IMR-90 (cell line): ENCODE measurements at regions of chr7 and their contacts with region 1.

Region 1: GRCh38 chr7:36512616-36513015 is 123.0 kb downstream of the ANLN start:
- DNase-seq: no peak
- ATAC-seq: no peak
- H3K4me3 ChIP-seq: no peak overlapping the region
- H3K27ac ChIP-seq: no peak overlapping the region
- H3K4me1 ChIP-seq: no peaks in the 10 kb centered on the region
- H3K27me3 ChIP-seq: peaks cover 9% of the 10 kb centered on the region
- CTCF ChIP-seq: no peak
- POLR2A ChIP-seq: no peak
- RAD21 ChIP-seq: no peak

Region 2: DNA sequence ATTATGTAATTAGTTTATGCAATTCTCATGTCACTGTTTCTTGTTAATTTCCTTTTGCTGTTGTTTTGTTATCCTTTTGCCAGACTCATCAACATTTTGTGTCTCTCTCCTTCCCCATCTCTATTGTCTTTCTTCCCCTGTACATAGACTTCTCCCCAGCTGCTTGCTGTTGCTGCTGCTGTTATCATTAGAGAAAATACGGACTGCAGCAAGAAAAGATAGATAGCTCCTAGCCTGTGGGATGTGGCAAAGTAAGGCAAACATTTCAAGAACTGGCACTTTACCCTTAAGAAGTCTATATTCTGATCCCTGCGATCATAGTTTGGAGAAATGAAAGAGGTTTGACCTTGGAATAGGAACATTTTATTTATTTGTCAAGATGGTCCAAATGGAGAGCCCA is 49.5 kb after region 1 on chr7:
- CTCF ChIA-PET with region 1: no interaction called
- POLR2A ChIA-PET with region 1: no interaction called
- dilution Hi-C with region 1: no loop called
- in situ Hi-C with region 1: no loop called
- intact Hi-C with region 1: loop called (anchors 1 kb)
- DNase-seq: no peak
- ATAC-seq: no peak
- H3K4me3 ChIP-seq: no peak overlapping the region
- H3K27ac ChIP-seq: no peak overlapping the region
- H3K4me1 ChIP-seq: no peaks in the 10 kb centered on the region
- H3K27me3 ChIP-seq: no peaks in the 10 kb centered on the region; the same call in 1 of the 2 replicates
- CTCF ChIP-seq: no peak
- POLR2A ChIP-seq: no peak
- RAD21 ChIP-seq: no peak

Region 3: GRCh38 chr7:37942934-37943610 is 1430.5 kb after region 1 on chr7:
- CTCF ChIA-PET with region 1: no interaction called
- POLR2A ChIA-PET with region 1: no interaction called
- dilution Hi-C with region 1: no loop called
- in situ Hi-C with region 1: no loop called
- intact Hi-C with region 1: no loop called
- DNase-seq: no peak
- ATAC-seq: no peak
- H3K4me3 ChIP-seq: no peak overlapping the region
- H3K27ac ChIP-seq: no peak overlapping the region
- H3K4me1 ChIP-seq: no peaks in the 10 kb centered on the region
- H3K27me3 ChIP-seq: no peaks in the 10 kb centered on the region
- CTCF ChIP-seq: no peak
- POLR2A ChIP-seq: no peak
- RAD21 ChIP-seq: no peak